ENCODE measurements at regions of chrX and their contacts with region 1.

Region 1: DNA sequence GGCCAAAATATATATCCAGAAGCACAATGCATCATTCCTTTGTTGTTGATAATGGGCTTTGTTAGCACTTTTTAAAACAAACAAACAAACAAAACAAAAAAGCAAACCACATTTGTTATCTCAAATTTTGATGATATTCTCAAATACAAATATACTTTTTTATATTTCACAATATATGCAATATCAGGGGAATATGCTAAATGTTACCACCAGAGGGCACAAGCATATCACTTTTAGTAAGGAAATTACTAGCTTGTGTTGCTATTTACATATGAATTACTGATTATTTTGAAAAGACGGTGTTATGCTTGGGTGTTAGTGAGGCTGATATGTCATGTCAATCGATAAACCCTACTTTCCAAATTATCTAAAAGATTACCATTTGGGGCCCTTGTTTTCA is 29.1 kb downstream of the RIPPLY1 start:
- DNase-seq: peak; percentile 10 to 35
- ATAC-seq: no peak
- H3K4me3 ChIP-seq: no peak overlapping the region
- H3K27ac ChIP-seq: no peak overlapping the region; a peak in 1 of 6 replicates
- H3K4me1 ChIP-seq: peaks cover 9% of the 10 kb centered on the region; the same call in 2 of the 3 replicates
- CTCF ChIP-seq: peak; percentile 73
- EP300 ChIP-seq: no peak
- POLR2A ChIP-seq: no peak
- RAD21 ChIP-seq: peak; percentile 74 to 82

Region 2: GRCh38 chrX:106811131-106811910 is 62.8 kb before region 1 on chrX:
- CTCF ChIA-PET with region 1: no interaction called
- POLR2A ChIA-PET with region 1: no interaction called
- DNase-seq: no peak
- ATAC-seq: no peak
- H3K4me3 ChIP-seq: no peak overlapping the region
- H3K27ac ChIP-seq: no peak overlapping the region
- H3K4me1 ChIP-seq: peaks cover 19% of the 10 kb centered on the region
- CTCF ChIP-seq: no peak
- EP300 ChIP-seq: no peak
- POLR2A ChIP-seq: no peak
- RAD21 ChIP-seq: no peak

Region 3: GRCh38 chrX:106862972-106863688 is 10.9 kb before region 1 on chrX:
- CTCF ChIA-PET with region 1: interaction called, 13 read pairs
- POLR2A ChIA-PET with region 1: no interaction called
- DNase-seq: peak; percentile 9 to 32
- ATAC-seq: peak; percentile 80 to 91; a peak in 5 of 6 replicates
- H3K4me3 ChIP-seq: no peak overlapping the region
- H3K27ac ChIP-seq: no peak overlapping the region
- H3K4me1 ChIP-seq: no peaks in the 10 kb centered on the region
- CTCF ChIP-seq: peak; percentile 41
- EP300 ChIP-seq: no peak
- POLR2A ChIP-seq: no peak
- RAD21 ChIP-seq: peak in 1 of 2 experiments; percentile 36; a peak in 2 of 5 replicates

Region 4: GRCh38 chrX:106959901-106960300 is 85.8 kb after region 1 on chrX:
- CTCF ChIA-PET with region 1: interaction called, 16 read pairs
- POLR2A ChIA-PET with region 1: no interaction called
- DNase-seq: peak; percentile 39 to 62
- ATAC-seq: peak; percentile 91 to 92
- H3K4me3 ChIP-seq: no peak overlapping the region
- H3K27ac ChIP-seq: peak overlapping the region; percentile 61 to 82
- H3K4me1 ChIP-seq: peaks cover 57% of the 10 kb centered on the region
- CTCF ChIP-seq: peak; percentile 57
- EP300 ChIP-seq: no peak
- POLR2A ChIP-seq: no peak
- RAD21 ChIP-seq: peak; percentile 75 to 77

Measured in A549 (cell line).